ENCODE measurements at regions of chr1 and their contacts with region 1.

Region 1: GRCh38 chr1:115980998-115981993 is 5.0 kb downstream of the SLC22A15 start:
- DNase-seq: no peak
- H3K4me3 ChIP-seq: no peak overlapping the region
- H3K27ac ChIP-seq: no peak overlapping the region
- H3K4me1 ChIP-seq: peaks cover 0 to 19% (median 9%) of the 10 kb centered on the region in 4 experiments; a peak in 5 of 7 replicates
- H3K27me3 ChIP-seq: no peaks in the 10 kb centered on the region
- CTCF ChIP-seq: peak; percentile 16 to 82 (median 70)
- EP300 ChIP-seq: no peak
- POLR2A ChIP-seq: no peak
- RAD21 ChIP-seq: peak; percentile 95 to 96

Region 2: GRCh38 chr1:115771847-115772457 is 209.3 kb before region 1 on chr1:
- CTCF ChIA-PET with region 1: interaction called, 11 read pairs
- POLR2A ChIA-PET with region 1: no interaction called
- DNase-seq: peak; percentile 53 to 72
- H3K4me3 ChIP-seq: peak overlapping the region in 3 of 4 experiments; percentile 13 to 47 (median 30); a peak in 4 of 8 replicates
- H3K27ac ChIP-seq: no peak overlapping the region
- H3K4me1 ChIP-seq: no peaks in the 10 kb centered on the region; a peak in 2 of 7 replicates
- H3K27me3 ChIP-seq: no peaks in the 10 kb centered on the region
- CTCF ChIP-seq: peak in 2 of 3 experiments; percentile 91 to 93; a peak in 3 of 4 replicates
- EP300 ChIP-seq: no peak
- POLR2A ChIP-seq: peak in 1 of 2 experiments; percentile 48; a peak in 1 of 3 replicates
- RAD21 ChIP-seq: peak; percentile 91 to 93

Region 3: DNA sequence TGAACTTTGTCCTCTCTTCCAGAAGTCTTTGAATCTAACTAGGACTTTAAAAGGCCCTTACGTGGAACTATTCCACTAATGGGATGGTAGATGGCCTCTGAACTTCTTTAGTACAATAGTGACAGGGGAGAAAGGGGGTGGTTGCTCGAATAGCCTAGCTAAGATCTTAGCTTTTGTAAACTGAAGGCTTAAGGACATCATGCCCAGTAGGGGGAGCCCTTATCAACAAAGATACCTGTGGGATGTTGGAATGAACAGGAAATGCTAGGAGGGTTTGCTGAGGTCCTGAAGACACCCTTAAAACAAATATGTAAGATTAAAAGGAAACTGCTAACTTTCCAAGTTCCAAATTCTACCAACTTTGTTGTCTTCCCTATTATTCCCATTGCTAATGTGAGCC is 173.6 kb before region 1 on chr1:
- CTCF ChIA-PET with region 1: interaction called, 27 read pairs
- POLR2A ChIA-PET with region 1: no interaction called
- DNase-seq: peak in 1 of 2 experiments; percentile 70
- H3K4me3 ChIP-seq: no peak overlapping the region
- H3K27ac ChIP-seq: no peak overlapping the region
- H3K4me1 ChIP-seq: peaks cover 0 to 6% (median under 1%) of the 10 kb centered on the region in 4 experiments; a peak in 1 of 7 replicates
- H3K27me3 ChIP-seq: no peaks in the 10 kb centered on the region
- CTCF ChIP-seq: peak in 2 of 3 experiments; percentile 66 to 76; a peak in 3 of 4 replicates
- EP300 ChIP-seq: no peak
- POLR2A ChIP-seq: no peak
- RAD21 ChIP-seq: peak; percentile 75 to 83

Region 4: GRCh38 chr1:115828101-115829022 is 152.9 kb before region 1 on chr1:
- CTCF ChIA-PET with region 1: interaction called, 25 read pairs
- POLR2A ChIA-PET with region 1: no interaction called
- DNase-seq: peak in 1 of 2 experiments; percentile 66
- H3K4me3 ChIP-seq: peak overlapping the region; percentile 55 to 79 (median 74)
- H3K27ac ChIP-seq: no peak overlapping the region
- H3K4me1 ChIP-seq: peaks cover 4 to 11% (median 6%) of the 10 kb centered on the region in 4 experiments; a peak in 6 of 7 replicates
- H3K27me3 ChIP-seq: peaks cover 0 to 15% (median 8%) of the 10 kb centered on the region in 4 experiments; a peak in 5 of 7 replicates
- CTCF ChIP-seq: no peak
- EP300 ChIP-seq: no peak
- POLR2A ChIP-seq: no peak
- RAD21 ChIP-seq: no peak

Region 5: DNA sequence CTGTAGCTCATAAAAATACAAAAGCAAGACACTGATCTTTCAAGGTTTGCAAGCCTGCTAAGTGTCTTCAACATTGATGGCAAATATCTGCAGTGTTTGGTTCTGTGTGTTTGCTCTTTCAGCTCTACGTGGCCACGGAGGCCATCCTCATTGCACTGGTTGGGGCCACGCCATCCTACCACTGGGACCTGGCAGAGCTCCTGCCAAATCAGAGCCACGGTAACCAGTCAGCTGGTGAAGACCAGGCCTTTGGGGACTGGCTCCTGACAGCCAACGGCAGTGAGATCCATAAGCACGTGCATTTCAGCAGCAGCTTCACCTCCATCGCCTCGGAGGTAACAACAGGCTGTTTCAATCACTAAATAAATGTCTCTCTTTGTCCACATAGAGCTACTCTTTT is 10.6 kb after region 1 on chr1:
- CTCF ChIA-PET with region 1: interaction called, 30 read pairs
- POLR2A ChIA-PET with region 1: interaction called, 4 read pairs
- DNase-seq: no peak
- H3K4me3 ChIP-seq: no peak overlapping the region
- H3K27ac ChIP-seq: no peak overlapping the region
- H3K4me1 ChIP-seq: no peaks in the 10 kb centered on the region
- H3K27me3 ChIP-seq: no peaks in the 10 kb centered on the region
- CTCF ChIP-seq: no peak
- EP300 ChIP-seq: no peak
- POLR2A ChIP-seq: no peak
- RAD21 ChIP-seq: no peak

Region 6: DNA sequence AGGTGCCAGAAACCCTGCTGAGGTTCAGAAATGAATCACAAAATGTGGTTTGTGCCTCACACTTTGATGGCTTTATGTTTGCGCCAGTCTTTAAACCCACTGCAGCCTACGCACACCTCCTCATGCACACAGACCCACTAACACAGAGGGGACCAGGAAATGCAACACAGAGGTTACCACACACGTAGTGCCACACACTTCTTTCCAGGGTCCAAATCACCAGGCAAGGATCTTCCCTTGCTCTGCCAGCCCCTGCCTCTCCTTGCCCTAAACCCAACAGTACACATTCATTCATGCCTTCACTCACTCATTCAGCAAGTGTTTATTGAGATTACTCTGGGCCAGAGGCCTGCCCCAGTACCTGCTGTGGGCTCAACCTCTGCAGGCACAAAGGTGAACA is 147.4 kb after region 1 on chr1:
- CTCF ChIA-PET with region 1: no interaction called
- POLR2A ChIA-PET with region 1: no interaction called
- DNase-seq: no peak
- H3K4me3 ChIP-seq: no peak overlapping the region
- H3K27ac ChIP-seq: no peak overlapping the region
- H3K4me1 ChIP-seq: no peaks in the 10 kb centered on the region
- H3K27me3 ChIP-seq: no peaks in the 10 kb centered on the region; a peak in 1 of 7 replicates
- CTCF ChIP-seq: no peak
- EP300 ChIP-seq: no peak
- POLR2A ChIP-seq: no peak
- RAD21 ChIP-seq: no peak